Heart left ventricle (tissue), 16 donors: ENCODE measurements at regions of chr2 and their contacts with region 1.

Region 1: DNA sequence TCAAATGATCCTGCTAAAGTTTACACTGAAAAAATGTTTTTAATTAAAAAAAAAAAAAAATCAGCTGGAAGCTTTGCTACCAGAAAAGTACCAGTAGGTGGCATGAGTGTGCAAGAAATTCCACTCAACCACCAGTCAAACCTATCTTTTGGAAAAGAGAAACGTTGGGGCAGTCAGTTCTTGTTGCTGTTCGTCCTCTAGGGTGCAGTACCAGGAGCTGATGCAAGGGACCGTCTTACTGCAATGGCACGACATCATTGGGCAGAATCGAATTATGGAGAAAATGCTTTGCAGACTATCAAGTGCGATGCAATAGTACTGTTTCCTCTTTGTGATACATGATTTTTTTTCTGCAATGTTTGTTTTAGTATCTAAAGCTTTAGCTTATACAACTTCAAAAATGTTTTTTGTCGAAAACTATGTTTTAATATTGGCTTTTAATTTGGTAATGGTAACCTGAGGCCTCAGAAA is 18.3 kb downstream of the YPEL5 start:
- DNase-seq: peak in 4 of 5 donors; percentile 50 to 61 (median 56)
- ATAC-seq: peak in 3 of 4 donors; percentile 81 to 88 (median 85)
- H3K4me3 ChIP-seq: no peak overlapping the region
- H3K27ac ChIP-seq: no peak overlapping the region
- H3K4me1 ChIP-seq: peaks cover 0 to 19% (median 0%) of the 10 kb centered on the region in 12 donors
- H3K27me3 ChIP-seq: no peaks in the 10 kb centered on the region
- CTCF ChIP-seq: peak; percentile 84 to 95 (median 90)
- POLR2A ChIP-seq: no peak

Region 2: DNA sequence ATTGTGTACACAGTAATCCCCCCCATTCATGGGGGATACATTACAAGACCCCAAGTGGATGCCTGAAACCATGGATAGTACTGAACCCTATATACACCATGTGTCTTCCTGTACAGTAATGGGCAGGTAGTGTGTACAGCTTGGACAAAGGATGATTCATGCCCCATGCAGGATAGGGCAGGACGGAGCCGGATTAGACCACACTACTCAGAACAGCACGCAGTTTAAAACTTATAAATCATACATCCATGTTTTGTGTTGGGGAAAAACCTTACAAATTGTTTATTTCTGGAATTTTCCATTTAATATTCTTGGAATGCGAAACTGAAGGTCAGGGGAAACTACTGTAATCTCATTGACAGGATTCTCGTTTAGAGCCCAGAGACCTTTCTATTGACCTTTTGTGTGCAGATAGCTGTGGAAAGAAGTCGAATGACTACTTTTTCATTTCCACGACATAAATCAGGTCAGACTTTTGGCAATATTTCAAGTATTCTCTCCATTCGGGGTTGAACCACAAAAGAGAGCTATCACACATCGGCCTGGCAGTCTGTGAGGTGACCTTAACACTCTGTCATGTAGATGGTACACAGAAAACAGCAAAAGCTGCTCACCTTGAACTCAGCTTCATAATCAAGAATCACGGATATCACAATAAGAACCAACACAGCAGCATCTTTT is 28.2 kb before region 1 on chr2:
- intact Hi-C with region 1: no loop called
- DNase-seq: no peak
- ATAC-seq: no peak
- H3K4me3 ChIP-seq: no peak overlapping the region
- H3K27ac ChIP-seq: no peak overlapping the region
- H3K4me1 ChIP-seq: peaks cover 0 to 4% (median 0%) of the 10 kb centered on the region in 12 donors
- H3K27me3 ChIP-seq: peaks cover 0 to 8% (median 0%) of the 10 kb centered on the region in 9 donors
- CTCF ChIP-seq: no peak
- POLR2A ChIP-seq: no peak

Region 3: DNA sequence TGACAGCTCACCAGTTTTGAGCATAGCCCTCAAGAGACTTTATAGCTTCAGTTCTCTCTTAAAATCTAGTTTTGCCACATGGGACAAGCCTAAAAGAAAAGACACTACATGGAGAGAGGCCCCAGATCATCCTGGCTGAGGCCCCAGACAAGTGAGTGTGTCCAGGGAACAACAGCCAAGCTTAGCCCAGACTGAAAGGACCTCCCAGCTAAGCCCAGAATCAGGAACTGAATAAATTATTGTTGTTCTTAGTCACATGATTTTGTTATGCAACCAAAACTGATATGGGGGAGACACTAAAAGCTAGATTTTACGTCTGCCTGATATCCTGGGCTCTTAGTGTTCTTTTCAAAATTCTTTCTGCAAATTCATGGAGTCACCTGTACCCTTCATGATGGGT is 36.9 kb after region 1 on chr2:
- intact Hi-C with region 1: loop called in 8 of 10 experiments (anchors 5 kb)
- DNase-seq: peak in 3 of 5 donors; percentile 54 to 60 (median 60)
- ATAC-seq: peak; percentile 76 to 89 (median 86)
- H3K4me3 ChIP-seq: no peak overlapping the region
- H3K27ac ChIP-seq: peak overlapping the region in 10 of 12 donors; percentile 18 to 66 (median 32)
- H3K4me1 ChIP-seq: peaks cover 0 to 33% (median 8%) of the 10 kb centered on the region in 12 donors
- H3K27me3 ChIP-seq: no peaks in the 10 kb centered on the region
- CTCF ChIP-seq: no peak
- POLR2A ChIP-seq: no peak

Region 4: GRCh38 chr2:30208452-30208851 is 43.4 kb after region 1 on chr2:
- intact Hi-C with region 1: loop called in 8 of 10 experiments (anchors 5 kb)
- DNase-seq: peak in 4 of 5 donors; percentile 63 to 79 (median 74)
- ATAC-seq: peak; percentile 51 to 96 (median 94)
- H3K4me3 ChIP-seq: no peak overlapping the region
- H3K27ac ChIP-seq: peak overlapping the region in 2 of 12 donors; percentile 16 to 35
- H3K4me1 ChIP-seq: peaks cover 0 to 28% (median 4%) of the 10 kb centered on the region in 12 donors
- H3K27me3 ChIP-seq: no peaks in the 10 kb centered on the region
- CTCF ChIP-seq: peak; percentile 82 to 96 (median 90)
- POLR2A ChIP-seq: no peak

Region 5: DNA sequence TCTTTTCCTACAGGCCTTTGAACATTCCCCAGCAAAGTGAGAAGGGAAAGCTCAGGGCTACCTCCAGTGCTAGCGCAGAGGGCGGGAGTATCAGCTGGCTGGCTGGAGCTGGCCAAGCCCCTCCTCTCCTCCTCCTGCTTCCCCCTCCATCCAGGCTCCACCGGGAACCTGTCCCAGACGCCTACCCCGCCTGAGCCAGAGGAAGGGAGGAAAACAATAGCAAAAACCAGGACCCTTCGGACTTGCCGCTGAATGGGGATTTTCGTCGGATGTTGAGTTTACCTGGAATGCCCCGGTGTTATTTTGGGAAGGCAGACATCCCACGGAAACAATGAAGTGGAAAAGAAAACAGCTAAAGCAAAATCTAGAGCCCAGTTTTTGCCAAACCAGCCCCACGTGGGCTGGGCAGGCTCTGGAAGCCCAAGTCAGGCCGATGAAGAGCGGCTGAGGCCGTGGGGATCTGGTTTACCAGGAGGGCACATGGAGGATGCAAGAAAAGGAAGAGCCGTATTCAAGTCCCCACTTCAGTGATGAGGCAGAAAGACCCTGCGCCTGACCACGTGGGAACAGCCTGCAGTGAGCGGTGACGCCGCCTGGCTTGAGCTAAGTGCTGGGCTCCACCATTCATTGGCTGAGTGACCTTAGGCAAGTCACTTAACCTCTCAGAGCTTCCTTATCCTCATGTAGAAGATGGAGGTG is 181.5 kb after region 1 on chr2:
- intact Hi-C with region 1: loop called in 1 of 10 experiments (anchors 10 kb)
- DNase-seq: peak; percentile 85 to 92 (median 88)
- ATAC-seq: peak; percentile 96 to 98 (median 96)
- H3K4me3 ChIP-seq: peak overlapping the region; percentile 5 to 63 (median 54)
- H3K27ac ChIP-seq: peak overlapping the region; percentile 69 to 96 (median 86)
- H3K4me1 ChIP-seq: peaks cover 8 to 55% (median 37%) of the 10 kb centered on the region in 12 donors
- H3K27me3 ChIP-seq: no peaks in the 10 kb centered on the region
- CTCF ChIP-seq: no peak
- POLR2A ChIP-seq: peak in 1 of 2 donors; percentile 69

Region 6: GRCh38 chr2:31170071-31170698 is 1005.1 kb after region 1 on chr2:
- intact Hi-C with region 1: loop called in 2 of 10 experiments (anchors 10 kb)
- DNase-seq: peak; percentile 30 to 73 (median 42)
- ATAC-seq: peak; percentile 57 to 93 (median 86)
- H3K4me3 ChIP-seq: no peak overlapping the region
- H3K27ac ChIP-seq: no peak overlapping the region
- H3K4me1 ChIP-seq: no peaks in the 10 kb centered on the region
- H3K27me3 ChIP-seq: no peaks in the 10 kb centered on the region
- CTCF ChIP-seq: peak; percentile 83 to 95 (median 88)
- POLR2A ChIP-seq: no peak